SK-MEL-5 (cell line): ENCODE measurements at regions of chr14 and their contacts with region 1.

Region 1: DNA sequence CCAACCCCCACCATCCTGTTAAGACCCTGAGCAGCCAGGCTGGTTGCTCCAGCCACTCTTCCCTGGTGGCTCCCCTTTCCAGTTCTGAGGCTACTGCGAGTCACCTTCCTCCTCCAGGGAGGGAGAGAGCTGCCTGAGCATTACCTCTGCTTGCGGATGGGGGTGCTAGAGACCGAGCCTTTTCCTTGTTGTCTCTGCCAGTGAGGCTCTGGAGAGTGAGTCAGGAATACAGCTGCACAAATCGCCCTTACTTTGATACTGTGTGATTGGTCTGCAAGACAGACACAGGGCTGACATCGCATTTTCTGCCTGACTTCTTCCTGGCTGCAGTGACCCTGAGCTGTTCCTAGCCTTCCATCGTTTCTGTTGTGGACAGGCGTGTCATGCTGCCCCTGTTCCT is 94.3 kb downstream of the SLC25A47 start:
- DNase-seq: peak; percentile 93

Region 2: DNA sequence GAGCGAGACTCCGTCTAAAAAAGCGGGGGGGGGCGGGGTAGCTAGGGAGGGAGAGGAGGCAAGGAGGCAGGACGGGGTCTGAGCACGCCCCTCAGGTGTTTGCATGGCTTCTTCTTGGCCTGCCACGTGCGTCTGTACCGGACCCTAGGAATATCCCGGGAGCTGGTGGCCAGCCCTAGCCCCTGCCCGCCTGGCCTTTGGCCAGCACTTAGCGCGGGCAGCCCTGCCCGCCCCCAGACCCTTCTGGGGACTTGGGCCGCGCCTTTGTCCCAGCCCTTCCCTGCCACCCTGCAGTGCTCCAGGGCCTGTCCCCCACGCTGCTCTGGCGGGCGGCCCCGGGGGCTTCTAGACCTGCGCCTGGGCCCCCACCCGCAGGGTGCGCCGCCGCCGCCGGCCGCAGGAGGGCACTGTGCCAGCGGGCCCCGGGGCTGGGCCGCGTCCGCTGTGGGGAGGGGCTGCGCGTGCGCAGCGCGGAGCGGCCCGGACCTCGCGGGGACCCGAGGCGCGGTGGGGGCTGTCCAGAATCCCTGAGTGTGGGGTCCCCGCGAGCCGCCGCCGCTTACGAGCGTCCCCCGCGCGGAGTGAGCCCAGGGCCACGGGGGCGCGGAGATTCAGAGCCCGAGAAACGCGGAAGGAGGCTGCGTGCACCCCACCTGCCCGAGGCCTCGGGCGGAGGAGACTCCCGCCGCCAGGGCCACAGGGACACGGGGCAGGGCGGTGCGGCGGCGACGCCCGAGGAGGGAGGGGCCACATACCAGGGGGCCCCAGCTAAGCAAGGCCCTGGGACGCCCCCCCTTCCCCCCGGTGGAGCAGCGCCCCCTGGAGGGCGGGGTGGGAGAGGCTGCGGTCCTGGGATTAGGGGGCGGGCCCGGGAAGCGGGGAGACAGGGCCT is 132.2 kb before region 1 on chr14:
- in situ Hi-C with region 1: no loop called
- DNase-seq: peak; percentile 52

Region 3: DNA sequence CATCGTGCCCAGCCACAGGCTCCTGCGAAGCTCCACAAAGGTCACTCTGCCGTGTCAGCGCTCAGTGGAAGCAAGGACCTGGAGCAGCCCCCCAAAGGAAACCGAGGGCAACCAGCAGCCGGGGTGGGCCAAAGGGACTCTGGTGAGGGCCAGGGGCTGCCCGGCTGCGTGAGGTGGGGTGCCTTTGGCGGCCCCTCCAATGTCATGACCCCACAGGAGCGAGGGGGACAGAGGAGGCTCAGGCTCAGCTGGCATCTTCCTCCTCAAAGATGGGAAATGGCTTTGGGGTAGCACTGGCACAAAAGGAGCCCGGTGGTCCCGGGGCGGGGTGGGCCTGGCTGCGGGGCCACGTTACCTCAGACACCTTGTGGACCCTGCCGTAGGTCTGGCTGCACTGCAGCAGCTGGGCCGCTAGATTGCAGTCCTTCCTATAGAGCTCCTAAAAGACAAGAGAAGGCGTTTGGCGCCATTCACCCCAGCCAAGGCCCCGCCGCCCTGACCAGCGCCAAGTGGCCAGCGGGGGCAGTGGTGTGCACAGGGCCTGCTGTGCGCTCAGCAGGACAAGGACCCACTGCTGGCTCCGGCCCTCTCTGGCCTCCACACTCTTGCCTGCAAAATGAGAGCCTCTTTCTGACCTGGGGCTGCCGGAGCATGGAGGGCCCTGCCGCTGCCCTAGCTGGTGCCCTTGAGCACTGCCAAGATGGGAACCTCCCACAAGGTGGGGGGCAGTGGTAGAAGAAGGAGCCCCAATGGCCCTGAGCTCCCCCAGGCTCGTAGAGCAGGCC is 122.9 kb after region 1 on chr14:
- in situ Hi-C with region 1: no loop called
- DNase-seq: no peak

Region 4: GRCh38 chr14:100662879-100663760 is 245.7 kb after region 1 on chr14:
- in situ Hi-C with region 1: loop called (anchors 25 kb)
- DNase-seq: peak; percentile 82

Region 5: DNA sequence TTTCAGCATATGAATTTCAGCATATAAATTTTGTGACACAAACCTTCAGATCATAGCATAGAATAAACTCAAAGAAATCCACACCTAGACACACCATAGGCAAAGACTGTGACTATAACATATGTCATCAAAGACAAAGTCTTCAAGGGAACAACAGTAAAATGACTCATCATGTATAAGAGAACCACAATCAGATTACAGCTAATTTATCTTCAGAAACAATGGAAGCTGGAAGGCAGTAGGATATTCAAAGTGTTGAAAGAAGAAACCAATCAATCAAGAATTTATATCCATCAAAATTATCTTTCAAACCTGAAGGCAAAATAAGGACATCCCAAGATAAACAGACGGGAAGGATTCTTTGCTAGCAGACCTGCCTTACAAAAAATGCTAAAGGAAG is 338.2 kb after region 1 on chr14:
- in situ Hi-C with region 1: no loop called
- DNase-seq: no peak